ENCODE measurements at regions of chr11 and their contacts with region 1.

Region 1: DNA sequence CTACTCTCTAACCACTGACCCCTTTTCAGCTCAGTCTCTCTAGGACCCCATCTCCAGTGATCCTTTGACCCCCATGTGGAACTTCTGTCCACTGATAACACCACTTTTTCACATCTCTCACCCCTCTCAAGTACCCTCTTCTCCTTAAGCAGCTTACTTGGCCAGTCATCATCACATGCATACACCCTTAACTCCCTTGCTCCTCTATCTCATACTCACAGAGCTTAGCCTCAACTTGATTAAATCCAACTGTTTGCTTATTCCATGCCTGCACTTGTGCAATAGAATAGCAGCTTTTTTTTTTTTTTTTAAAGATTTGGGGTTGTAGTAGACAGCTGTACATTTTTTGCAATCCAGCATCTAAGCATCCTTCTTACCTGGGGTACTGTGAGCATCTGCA is 22.2 kb downstream of the AQP11 start:
- DNase-seq: no peak
- H3K4me3 ChIP-seq: no peak overlapping the region
- H3K27ac ChIP-seq: no peak overlapping the region
- H3K4me1 ChIP-seq: no peaks in the 10 kb centered on the region
- H3K27me3 ChIP-seq: no peaks in the 10 kb centered on the region
- CTCF ChIP-seq: no peak

Region 2: GRCh38 chr11:77053217-77054015 is 558.5 kb before region 1 on chr11:
- CTCF ChIA-PET with region 1: no interaction called
- dilution Hi-C with region 1: no loop called
- in situ Hi-C with region 1: no loop called
- intact Hi-C with region 1: loop called (anchors 5 kb)
- DNase-seq: no peak
- H3K4me3 ChIP-seq: no peak overlapping the region
- H3K27ac ChIP-seq: no peak overlapping the region
- H3K4me1 ChIP-seq: no peaks in the 10 kb centered on the region
- H3K27me3 ChIP-seq: no peaks in the 10 kb centered on the region
- CTCF ChIP-seq: no peak

Region 3: GRCh38 chr11:77522215-77522614 is 89.7 kb before region 1 on chr11:
- CTCF ChIA-PET with region 1: no interaction called
- dilution Hi-C with region 1: loop called (anchors 5 kb)
- in situ Hi-C with region 1: no loop called
- intact Hi-C with region 1: no loop called
- DNase-seq: peak; percentile 21
- H3K4me3 ChIP-seq: no peak overlapping the region
- H3K27ac ChIP-seq: no peak overlapping the region
- H3K4me1 ChIP-seq: no peaks in the 10 kb centered on the region
- H3K27me3 ChIP-seq: no peaks in the 10 kb centered on the region
- CTCF ChIP-seq: no peak

Measured in mammary epithelial cell (primary cell).